IMR-90 (cell line): ENCODE measurements at regions of chr1 and their contacts with region 1.

Region 1: GRCh38 chr1:112439592-112439991 is 43.6 kb downstream of the CTTNBP2NL start:
- DNase-seq: no peak
- ATAC-seq: no peak
- H3K4me3 ChIP-seq: no peak overlapping the region
- H3K27ac ChIP-seq: peak overlapping the region; percentile 53; the same call in 1 of the 2 replicates
- H3K4me1 ChIP-seq: peaks cover 10% of the 10 kb centered on the region
- H3K27me3 ChIP-seq: no peaks in the 10 kb centered on the region
- CTCF ChIP-seq: no peak
- POLR2A ChIP-seq: no peak
- RAD21 ChIP-seq: no peak

Region 2: GRCh38 chr1:112358798-112359408 is 80.7 kb before region 1 on chr1:
- CTCF ChIA-PET with region 1: no interaction called
- POLR2A ChIA-PET with region 1: no interaction called
- dilution Hi-C with region 1: no loop called
- in situ Hi-C with region 1: no loop called
- intact Hi-C with region 1: no loop called
- DNase-seq: peak; percentile 45
- ATAC-seq: peak; percentile 82
- H3K4me3 ChIP-seq: no peak overlapping the region
- H3K27ac ChIP-seq: peak overlapping the region; percentile 96; the same call in 1 of the 2 replicates
- H3K4me1 ChIP-seq: peaks cover 11% of the 10 kb centered on the region
- H3K27me3 ChIP-seq: peaks cover 26% of the 10 kb centered on the region
- CTCF ChIP-seq: peak; percentile 63
- POLR2A ChIP-seq: no peak
- RAD21 ChIP-seq: peak; percentile 61

Region 3: GRCh38 chr1:112409414-112409813 is 30.2 kb before region 1 on chr1:
- CTCF ChIA-PET with region 1: no interaction called
- POLR2A ChIA-PET with region 1: no interaction called
- dilution Hi-C with region 1: no loop called
- in situ Hi-C with region 1: no loop called
- intact Hi-C with region 1: loop called (anchors 2 kb)
- DNase-seq: no peak
- ATAC-seq: no peak
- H3K4me3 ChIP-seq: no peak overlapping the region
- H3K27ac ChIP-seq: no peak overlapping the region
- H3K4me1 ChIP-seq: peaks cover 9% of the 10 kb centered on the region; the same call in 1 of the 2 replicates
- H3K27me3 ChIP-seq: no peaks in the 10 kb centered on the region
- CTCF ChIP-seq: no peak
- POLR2A ChIP-seq: no peak
- RAD21 ChIP-seq: no peak

Region 4: GRCh38 chr1:112803906-112804762 is 364.5 kb after region 1 on chr1:
- CTCF ChIA-PET with region 1: no interaction called
- POLR2A ChIA-PET with region 1: no interaction called
- dilution Hi-C with region 1: no loop called
- in situ Hi-C with region 1: no loop called
- intact Hi-C with region 1: no loop called
- DNase-seq: peak; percentile 65
- ATAC-seq: peak; percentile 96
- H3K4me3 ChIP-seq: no peak overlapping the region
- H3K27ac ChIP-seq: no peak overlapping the region
- H3K4me1 ChIP-seq: no peaks in the 10 kb centered on the region
- H3K27me3 ChIP-seq: peaks cover 12% of the 10 kb centered on the region
- CTCF ChIP-seq: peak; percentile 96
- POLR2A ChIP-seq: peak; percentile 53; the same call in 1 of the 2 replicates
- RAD21 ChIP-seq: peak; percentile 99